Panc1 (cell line): ENCODE measurements at regions of chr5 and their contacts with region 1.

Region 1: DNA sequence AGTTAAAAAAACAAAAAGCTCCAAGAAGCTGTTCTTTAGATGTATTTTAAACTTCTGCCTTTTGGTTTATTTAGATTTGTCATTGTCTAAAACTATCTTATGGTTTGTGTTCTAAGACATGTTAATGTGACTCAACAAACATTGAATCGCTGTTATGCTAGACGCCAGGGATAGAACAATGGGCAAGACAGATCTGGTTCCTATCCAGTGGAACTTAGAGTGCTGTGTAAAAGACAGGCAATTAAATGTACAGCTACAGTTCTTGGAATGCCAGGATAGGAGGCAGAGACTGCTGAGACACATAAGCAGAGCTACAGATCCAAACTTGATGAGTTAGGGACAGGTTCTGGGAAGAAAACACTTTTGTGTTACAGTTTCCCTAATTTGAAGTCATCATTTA is 22.4 kb downstream of the LYRM7 start:
- DNase-seq: no peak
- ATAC-seq: no peak
- H3K4me3 ChIP-seq: no peak overlapping the region
- H3K27ac ChIP-seq: no peak overlapping the region
- H3K4me1 ChIP-seq: no peaks in the 10 kb centered on the region
- H3K27me3 ChIP-seq: no peaks in the 10 kb centered on the region
- CTCF ChIP-seq: no peak

Region 2: DNA sequence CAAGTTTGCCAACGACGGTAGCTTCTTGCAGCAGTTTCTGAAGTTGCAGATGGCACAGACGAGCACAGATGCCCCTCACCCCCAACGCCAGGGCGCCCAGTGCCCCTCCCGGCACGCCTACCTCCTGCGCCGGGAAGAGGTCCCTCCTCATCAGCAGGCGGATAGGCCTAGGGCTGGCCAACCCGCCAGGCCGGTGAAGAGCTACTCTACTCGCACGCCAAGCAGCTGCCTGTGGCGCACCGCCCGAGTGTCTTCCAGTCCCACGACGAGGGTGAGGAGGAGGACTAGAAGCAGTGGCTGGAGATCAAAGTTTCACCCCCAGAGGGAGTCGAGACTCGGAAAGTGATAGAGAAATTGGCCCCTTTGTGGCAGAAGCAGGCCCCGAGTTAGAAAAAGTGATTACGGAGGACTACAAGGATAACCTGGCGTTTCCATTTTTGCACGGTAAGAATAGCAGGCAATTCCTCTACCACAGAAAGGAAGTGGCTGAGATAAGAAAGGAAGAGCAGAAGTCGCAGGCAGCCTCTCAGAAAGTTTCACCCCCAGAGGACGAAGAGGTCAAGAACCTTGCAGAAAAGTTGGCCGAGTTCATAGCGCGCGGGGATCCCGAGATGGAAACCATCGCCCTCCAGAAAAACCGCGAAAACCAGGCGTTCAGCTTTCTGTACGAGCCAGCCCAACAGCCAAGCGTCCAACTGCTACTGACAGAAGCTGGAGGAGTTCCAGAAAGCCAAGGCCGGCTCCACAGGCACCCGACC is 198.4 kb before region 1 on chr5:
- CTCF ChIA-PET with region 1: interaction called, 11 read pairs
- POLR2A ChIA-PET with region 1: no interaction called
- in situ Hi-C with region 1: no loop called
- intact Hi-C with region 1: no loop called
- DNase-seq: no peak
- ATAC-seq: no peak
- H3K4me3 ChIP-seq: no peak overlapping the region
- H3K27ac ChIP-seq: no peak overlapping the region
- H3K4me1 ChIP-seq: no peaks in the 10 kb centered on the region
- H3K27me3 ChIP-seq: no peaks in the 10 kb centered on the region
- CTCF ChIP-seq: no peak

Region 3: DNA sequence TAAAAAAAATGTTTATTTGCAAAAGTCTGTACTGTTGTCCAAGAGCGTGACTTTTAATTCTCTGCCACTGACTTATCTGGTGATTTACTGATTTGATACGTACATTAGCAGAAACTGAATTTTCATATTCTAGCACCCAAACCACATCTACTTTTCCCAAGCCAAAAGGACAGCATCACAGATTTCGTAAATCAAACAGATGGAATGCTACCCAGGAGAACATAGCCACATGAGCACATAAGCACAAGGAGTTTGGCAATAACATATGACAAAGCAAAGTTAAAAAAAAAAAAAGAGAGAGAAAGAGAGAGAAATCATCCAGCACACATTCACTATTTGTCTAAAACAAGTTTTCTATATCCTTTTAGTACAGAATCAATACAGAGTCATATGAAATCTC is 111.7 kb before region 1 on chr5:
- CTCF ChIA-PET with region 1: no interaction called
- POLR2A ChIA-PET with region 1: no interaction called
- in situ Hi-C with region 1: no loop called
- intact Hi-C with region 1: no loop called
- DNase-seq: no peak
- ATAC-seq: no peak
- H3K4me3 ChIP-seq: no peak overlapping the region
- H3K27ac ChIP-seq: no peak overlapping the region
- H3K4me1 ChIP-seq: no peaks in the 10 kb centered on the region
- H3K27me3 ChIP-seq: no peaks in the 10 kb centered on the region
- CTCF ChIP-seq: no peak

Region 4: DNA sequence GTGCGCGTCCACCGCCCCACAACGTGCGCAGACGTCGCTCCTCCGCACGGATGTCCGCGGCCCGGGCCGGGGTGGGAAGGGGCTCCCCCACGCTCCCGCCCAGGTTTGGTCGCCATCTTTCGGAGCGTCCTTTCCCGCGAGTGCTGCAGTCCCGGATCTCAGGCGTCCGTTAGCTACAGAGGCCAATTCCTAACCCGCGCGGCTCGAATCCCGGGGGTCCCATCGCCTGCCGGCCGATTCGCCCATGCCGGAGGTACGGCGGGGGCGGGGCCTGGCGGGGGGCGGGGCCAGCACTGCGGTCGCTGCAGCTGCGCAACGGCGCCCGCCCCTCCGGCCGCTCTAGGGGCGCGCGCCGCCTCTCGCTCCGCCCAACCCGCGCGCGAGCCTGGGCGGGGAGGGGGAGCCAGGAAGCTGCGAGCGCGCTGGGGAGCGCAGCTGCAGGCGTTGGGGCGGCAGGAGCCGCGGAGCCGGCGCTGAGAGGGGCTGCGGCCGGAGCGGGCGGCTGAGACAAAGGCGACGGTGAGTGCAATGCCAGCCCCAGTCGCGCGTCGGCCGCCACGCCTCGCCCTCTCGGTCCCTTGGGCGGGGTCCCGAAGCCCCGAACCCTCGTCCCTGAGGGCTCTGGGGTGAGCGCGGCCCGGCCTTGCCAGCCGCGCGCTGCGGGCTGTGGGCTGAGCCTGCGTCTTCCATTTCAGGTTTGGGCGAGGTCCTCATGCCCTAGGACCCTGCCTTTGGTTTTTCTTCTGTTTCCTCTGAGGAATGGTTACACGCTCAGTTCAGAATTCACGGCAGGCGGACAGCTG is 70.7 kb after region 1 on chr5 and contains the start of gene CDC42SE2:
- CTCF ChIA-PET with region 1: no interaction called
- POLR2A ChIA-PET with region 1: interaction called, 15 read pairs
- in situ Hi-C with region 1: no loop called
- intact Hi-C with region 1: no loop called
- DNase-seq: no peak
- ATAC-seq: peak; percentile 98
- H3K4me3 ChIP-seq: peak within 1 kb of the TSS; percentile 80 to 90
- H3K27ac ChIP-seq: peak within 1 kb of the TSS; percentile 95
- H3K4me1 ChIP-seq: peaks cover 3% of the 10 kb centered on the region; the same call in 1 of the 2 replicates
- H3K27me3 ChIP-seq: no peaks in the 10 kb centered on the region
- CTCF ChIP-seq: no peak
- total RNA-seq, gene CDC42SE2: 46.1 TPM